Naive thymus-derived CD4-positive, alpha-beta T cell (primary cell): ENCODE measurements at regions of chr7 and their contacts with region 1.

Region 1: DNA sequence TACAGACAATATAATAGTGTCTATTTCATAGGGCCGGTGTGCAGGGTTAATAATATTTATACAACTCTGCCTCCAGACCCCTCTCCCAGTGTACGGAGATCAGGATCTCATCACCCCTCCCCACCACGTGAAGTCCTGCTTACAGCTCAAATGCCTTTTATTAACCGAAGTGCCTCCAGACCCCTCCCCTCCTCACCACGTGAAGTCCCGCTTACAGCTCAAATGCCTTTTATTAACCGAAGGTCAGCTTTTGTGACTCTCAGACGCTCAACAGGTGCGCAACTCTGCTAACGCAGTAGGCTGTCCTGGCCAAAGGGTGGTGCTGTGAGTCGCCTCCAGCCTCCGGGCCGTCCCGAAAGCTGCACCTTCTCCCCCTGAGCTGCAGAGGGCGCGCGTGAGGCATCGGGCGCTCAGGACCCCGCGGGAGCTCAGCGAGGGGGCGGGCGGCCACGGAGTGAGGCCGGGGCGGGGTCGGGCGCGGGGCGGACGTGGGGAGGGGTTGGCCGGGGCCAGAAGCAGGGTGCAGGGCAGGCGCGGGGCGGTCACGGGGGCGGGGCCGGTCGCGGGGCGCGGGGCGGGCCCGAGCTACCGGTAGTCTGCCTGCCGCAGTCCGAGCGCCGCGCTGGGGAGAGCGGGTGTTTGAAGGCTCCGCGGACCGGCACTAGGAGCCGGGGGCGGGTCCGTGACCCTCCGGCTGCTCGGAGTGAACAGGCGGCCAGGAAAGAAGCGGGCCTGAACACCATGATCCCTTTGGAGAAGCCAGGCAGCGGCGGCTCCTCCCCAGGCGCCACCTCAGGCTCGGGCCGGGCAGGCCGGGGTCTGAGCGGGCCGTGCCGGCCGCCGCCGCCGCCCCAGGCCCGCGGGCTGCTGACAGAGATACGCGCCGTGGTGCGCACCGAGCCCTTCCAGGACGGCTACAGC is at the start of gene STK17A:
- DNase-seq: peak; percentile 91 to 100 (median 95)
- ATAC-seq: peak; percentile 93
- H3K4me3 ChIP-seq: peak within 1 kb of the TSS; percentile 79
- H3K4me3 Mint-ChIP-seq: peak within 1 kb of the TSS; percentile 96 to 100 (median 98)
- H3K27ac ChIP-seq: peak within 1 kb of the TSS; percentile 96
- H3K27ac Mint-ChIP-seq: peak within 1 kb of the TSS; percentile 89 to 100 (median 95)
- H3K4me1 ChIP-seq: peaks cover 8 to 10% of the 10 kb centered on the region in 2 donors
- H3K4me1 Mint-ChIP-seq: peaks cover 10 to 33% (median 13%) of the 10 kb centered on the region in 7 donors
- H3K27me3 ChIP-seq: no peaks in the 10 kb centered on the region
- H3K27me3 Mint-ChIP-seq: peaks cover 0 to 22% (median 6%) of the 10 kb centered on the region in 5 donors
- total RNA-seq, gene STK17A: 71.3 to 132 (median 95.8) TPM

Region 2: DNA sequence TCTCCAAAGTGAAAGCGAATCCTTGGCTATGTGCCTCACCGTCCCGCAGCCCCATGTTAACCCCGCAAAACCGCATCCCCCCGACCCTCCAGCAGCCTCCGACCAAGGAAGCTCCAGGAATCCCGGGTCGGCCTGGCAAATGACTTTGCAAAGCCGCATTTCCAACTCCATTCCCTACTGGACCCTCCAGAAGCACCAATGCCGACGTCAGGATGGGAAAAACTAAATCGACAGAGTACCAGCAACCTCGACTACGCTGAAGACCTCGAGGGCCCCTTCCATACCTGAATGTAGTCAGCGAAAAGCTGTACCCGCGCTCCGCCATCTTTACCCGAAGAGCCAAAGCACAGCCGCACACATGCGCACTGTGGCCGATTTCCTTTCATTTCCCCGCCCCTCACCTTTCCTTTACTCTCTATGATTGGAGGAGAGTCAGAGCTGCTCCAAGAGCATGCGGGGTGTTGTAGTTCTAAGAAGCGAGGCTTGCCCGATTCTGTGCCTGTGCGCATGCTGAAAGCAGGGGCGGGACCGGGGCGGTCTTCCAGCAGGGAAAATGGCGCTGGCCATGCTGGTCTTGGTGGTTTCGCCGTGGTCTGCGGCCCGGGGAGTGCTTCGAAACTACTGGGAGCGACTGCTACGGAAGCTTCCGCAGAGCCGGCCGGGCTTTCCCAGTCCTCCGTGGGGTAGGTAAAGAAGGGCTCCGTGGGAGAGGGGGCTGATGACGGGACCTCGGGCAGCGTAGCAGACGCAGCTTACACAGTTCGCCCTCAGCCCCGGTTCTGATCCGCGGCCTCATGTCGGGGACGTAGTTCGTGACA is 650.7 kb before region 1 on chr7 and contains the starts of genes MRPL32 and PSMA2:
- CTCF ChIA-PET with region 1: interaction called, 7 read pairs
- POLR2A ChIA-PET with region 1: interaction called, 13 read pairs
- intact Hi-C with region 1: loop called (anchors 1 kb)
- DNase-seq: peak; percentile 83 to 97 (median 94)
- ATAC-seq: peak; percentile 99
- H3K4me3 ChIP-seq: peak within 1 kb of the TSS; percentile 100
- H3K4me3 Mint-ChIP-seq: peak within 1 kb of the TSS; percentile 88 to 100 (median 98)
- H3K27ac ChIP-seq: peak within 1 kb of the TSS; percentile 89
- H3K27ac Mint-ChIP-seq: peak within 1 kb of the TSS; percentile 92 to 100 (median 97)
- H3K4me1 ChIP-seq: peaks cover 24 to 48% of the 10 kb centered on the region in 2 donors
- H3K4me1 Mint-ChIP-seq: peaks cover 31 to 93% (median 71%) of the 10 kb centered on the region in 7 donors
- H3K27me3 ChIP-seq: no peaks in the 10 kb centered on the region
- H3K27me3 Mint-ChIP-seq: no peaks in the 10 kb centered on the region
- total RNA-seq, gene MRPL32: 27.7 to 58.2 (median 53.4) TPM
- total RNA-seq, gene PSMA2: 29.3 to 144 (median 35.3) TPM

Region 3: DNA sequence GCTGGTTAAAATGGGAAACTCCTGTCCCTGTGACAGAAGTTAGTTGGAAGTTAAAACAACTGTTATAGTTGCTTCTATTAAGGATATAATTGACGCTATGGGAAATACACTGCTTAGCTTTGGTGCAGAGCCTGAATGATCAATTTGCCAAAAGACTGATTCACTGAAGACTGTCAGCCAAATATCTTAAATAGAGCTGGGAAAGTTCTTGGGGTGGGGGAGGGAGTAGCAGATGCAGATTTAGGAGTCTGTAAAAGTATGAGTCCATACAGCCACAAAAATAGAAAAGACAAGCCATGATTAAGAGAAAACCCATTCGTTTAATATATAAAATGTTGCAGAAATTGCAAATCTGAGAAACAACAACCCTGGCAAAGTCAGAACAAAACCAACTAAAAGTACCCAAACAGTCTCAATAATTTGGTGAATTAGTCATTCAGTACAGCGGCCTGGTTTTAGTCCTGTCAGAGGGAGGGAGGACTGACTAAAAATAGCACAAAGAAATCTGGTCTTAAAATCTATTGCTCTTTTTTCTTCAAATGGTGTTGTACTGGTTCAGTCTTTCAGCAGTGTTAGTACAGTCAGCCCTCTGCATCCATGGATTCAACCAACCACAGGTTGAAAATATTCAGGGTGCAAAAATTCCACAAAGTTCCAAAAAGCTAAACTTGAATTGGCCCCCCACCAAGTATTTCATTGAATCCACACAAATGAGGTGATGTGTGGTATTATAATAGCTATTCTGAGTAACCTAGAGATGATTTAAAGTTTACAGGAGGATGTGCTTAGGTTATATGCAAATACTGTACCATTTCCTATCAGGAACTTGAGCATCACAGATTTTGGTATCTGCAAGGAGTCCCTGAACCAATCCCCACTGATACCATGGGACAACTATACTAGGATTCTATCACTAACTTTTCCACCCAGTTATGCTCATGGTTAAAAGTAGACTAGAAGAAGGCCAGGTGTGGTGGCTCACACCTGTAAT is 30.1 kb after region 1 on chr7:
- CTCF ChIA-PET with region 1: interaction called, 12 read pairs
- POLR2A ChIA-PET with region 1: interaction called, 8 read pairs
- intact Hi-C with region 1: no loop called
- DNase-seq: no peak
- ATAC-seq: peak; percentile 30
- H3K4me3 ChIP-seq: no peak overlapping the region
- H3K4me3 Mint-ChIP-seq: peak overlapping the region; percentile 36 to 71 (median 52)
- H3K27ac ChIP-seq: peak overlapping the region; percentile 49
- H3K27ac Mint-ChIP-seq: peak overlapping the region in 8 of 9 donors; percentile 68 to 91 (median 78)
- H3K4me1 ChIP-seq: peaks cover 64 to 74% of the 10 kb centered on the region in 2 donors
- H3K4me1 Mint-ChIP-seq: peaks cover 44 to 77% (median 58%) of the 10 kb centered on the region in 7 donors
- H3K27me3 ChIP-seq: no peaks in the 10 kb centered on the region
- H3K27me3 Mint-ChIP-seq: no peaks in the 10 kb centered on the region

Region 4: GRCh38 chr7:43647673-43648472 is 65.1 kb after region 1 on chr7:
- CTCF ChIA-PET with region 1: interaction called, 99 read pairs
- POLR2A ChIA-PET with region 1: interaction called, 132 read pairs
- intact Hi-C with region 1: loop called (anchors 1 kb)
- DNase-seq: peak in 3 of 9 donors; percentile 34 to 53 (median 50)
- ATAC-seq: peak; percentile 2
- H3K4me3 ChIP-seq: peak overlapping the region; percentile 22
- H3K4me3 Mint-ChIP-seq: peak overlapping the region; percentile 78 to 91 (median 83)
- H3K27ac ChIP-seq: peak overlapping the region; percentile 80
- H3K27ac Mint-ChIP-seq: peak overlapping the region in 8 of 9 donors; percentile 90 to 100 (median 98)
- H3K4me1 ChIP-seq: peaks cover 88 to 89% of the 10 kb centered on the region in 2 donors
- H3K4me1 Mint-ChIP-seq: peaks cover 78 to 98% (median 95%) of the 10 kb centered on the region in 7 donors
- H3K27me3 ChIP-seq: no peaks in the 10 kb centered on the region
- H3K27me3 Mint-ChIP-seq: no peaks in the 10 kb centered on the region

Region 5: DNA sequence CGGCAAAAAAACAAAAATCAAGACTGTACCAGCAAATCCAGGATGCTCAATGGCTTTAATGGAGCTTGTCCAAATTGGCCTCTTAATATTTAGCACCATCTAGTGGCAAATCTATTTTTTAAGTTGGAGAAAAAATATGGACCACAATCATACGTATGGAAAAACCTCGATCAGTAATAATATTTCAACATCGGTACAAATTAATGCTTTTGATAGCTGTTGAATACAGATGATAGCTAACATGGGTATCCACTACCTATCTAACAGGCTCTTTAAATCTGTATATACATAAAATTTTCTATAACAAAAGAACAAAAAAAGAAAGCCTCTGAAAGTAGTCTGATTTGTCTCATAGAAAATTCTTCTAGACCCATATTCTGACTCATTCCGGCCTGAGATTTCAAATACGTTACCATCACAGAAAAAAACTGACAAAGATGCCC is 117.3 kb after region 1 on chr7:
- CTCF ChIA-PET with region 1: interaction called, 440 read pairs
- POLR2A ChIA-PET with region 1: interaction called, 185 read pairs
- intact Hi-C with region 1: loop called (anchors 1 kb)
- DNase-seq: peak in 7 of 9 donors; percentile 38 to 73 (median 67)
- ATAC-seq: peak; percentile 89
- H3K4me3 ChIP-seq: no peak overlapping the region
- H3K4me3 Mint-ChIP-seq: peak overlapping the region in 9 of 10 donors; percentile 3 to 75 (median 64)
- H3K27ac ChIP-seq: peak overlapping the region; percentile 32
- H3K27ac Mint-ChIP-seq: peak overlapping the region in 8 of 9 donors; percentile 49 to 81 (median 70)
- H3K4me1 ChIP-seq: peaks cover 12 to 30% of the 10 kb centered on the region in 2 donors
- H3K4me1 Mint-ChIP-seq: peaks cover 23 to 56% (median 44%) of the 10 kb centered on the region in 7 donors
- H3K27me3 ChIP-seq: no peaks in the 10 kb centered on the region
- H3K27me3 Mint-ChIP-seq: no peaks in the 10 kb centered on the region

Region 6: DNA sequence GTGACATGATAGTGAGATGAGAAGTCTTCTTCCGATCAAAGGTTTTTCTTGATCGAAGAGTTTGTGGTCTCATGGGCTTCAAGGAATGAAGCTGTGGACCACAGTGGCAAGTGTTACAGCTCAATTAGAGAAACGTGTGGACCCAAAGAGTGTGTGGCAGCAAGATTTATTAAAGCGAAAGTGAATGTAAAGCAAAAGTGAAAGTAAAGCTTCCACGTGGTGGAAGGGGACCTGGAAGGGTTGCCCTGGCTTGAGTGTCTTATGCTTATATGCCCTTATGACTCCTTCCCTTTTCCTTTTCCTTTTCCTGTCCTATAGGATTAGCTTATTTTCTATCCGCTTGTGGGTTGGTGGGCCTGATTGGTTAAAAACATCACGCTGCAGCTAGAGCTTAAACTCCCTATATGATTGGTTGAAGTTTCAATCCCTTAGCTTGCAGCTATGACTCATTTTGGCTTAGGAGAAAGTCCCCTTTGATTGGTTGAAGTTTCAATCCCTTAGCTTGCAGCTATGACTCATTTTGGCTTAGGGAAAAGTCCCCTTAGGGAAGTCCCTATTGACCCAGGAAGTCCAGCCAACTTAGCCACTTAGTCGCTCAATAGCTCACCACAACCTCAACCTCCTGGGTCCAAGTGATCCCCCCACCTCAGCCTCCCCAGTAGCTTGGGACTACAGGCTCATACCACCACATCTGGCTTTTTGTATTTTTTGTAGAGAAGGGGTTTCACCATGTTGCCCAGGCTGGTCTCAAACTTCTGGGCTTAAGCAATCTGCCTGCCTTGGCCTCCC is 251.9 kb after region 1 on chr7:
- CTCF ChIA-PET with region 1: interaction called, 22 read pairs
- POLR2A ChIA-PET with region 1: interaction called, 6 read pairs
- intact Hi-C with region 1: loop called (anchors 1 kb)
- DNase-seq: peak in 8 of 9 donors; percentile 25 to 56 (median 46)
- ATAC-seq: peak; percentile 44
- H3K4me3 ChIP-seq: peak overlapping the region; percentile 79
- H3K4me3 Mint-ChIP-seq: peak overlapping the region; percentile 74 to 96 (median 84)
- H3K27ac ChIP-seq: peak overlapping the region; percentile 33
- H3K27ac Mint-ChIP-seq: peak overlapping the region; percentile 79 to 95 (median 86)
- H3K4me1 ChIP-seq: peaks cover 8 to 15% of the 10 kb centered on the region in 2 donors
- H3K4me1 Mint-ChIP-seq: peaks cover 2 to 27% (median 21%) of the 10 kb centered on the region in 7 donors
- H3K27me3 ChIP-seq: no peaks in the 10 kb centered on the region
- H3K27me3 Mint-ChIP-seq: peaks cover 0 to 6% (median 0%) of the 10 kb centered on the region in 5 donors